Caco-2 (cell line): ENCODE measurements at regions of chr16 and their contacts with region 1.

Region 1: GRCh38 chr16:11715246-11715947 is 27.3 kb downstream of the TXNDC11 start:
- DNase-seq: no peak
- H3K4me3 ChIP-seq: no peak overlapping the region
- H3K4me3 Mint-ChIP-seq: no peak overlapping the region
- H3K27ac Mint-ChIP-seq: no peak overlapping the region
- H3K4me1 ChIP-seq: no peaks in the 10 kb centered on the region
- H3K4me1 Mint-ChIP-seq: peaks cover 6% of the 10 kb centered on the region
- H3K27me3 ChIP-seq: no peaks in the 10 kb centered on the region
- H3K27me3 Mint-ChIP-seq: no peaks in the 10 kb centered on the region
- CTCF ChIP-seq: no peak

Region 2: DNA sequence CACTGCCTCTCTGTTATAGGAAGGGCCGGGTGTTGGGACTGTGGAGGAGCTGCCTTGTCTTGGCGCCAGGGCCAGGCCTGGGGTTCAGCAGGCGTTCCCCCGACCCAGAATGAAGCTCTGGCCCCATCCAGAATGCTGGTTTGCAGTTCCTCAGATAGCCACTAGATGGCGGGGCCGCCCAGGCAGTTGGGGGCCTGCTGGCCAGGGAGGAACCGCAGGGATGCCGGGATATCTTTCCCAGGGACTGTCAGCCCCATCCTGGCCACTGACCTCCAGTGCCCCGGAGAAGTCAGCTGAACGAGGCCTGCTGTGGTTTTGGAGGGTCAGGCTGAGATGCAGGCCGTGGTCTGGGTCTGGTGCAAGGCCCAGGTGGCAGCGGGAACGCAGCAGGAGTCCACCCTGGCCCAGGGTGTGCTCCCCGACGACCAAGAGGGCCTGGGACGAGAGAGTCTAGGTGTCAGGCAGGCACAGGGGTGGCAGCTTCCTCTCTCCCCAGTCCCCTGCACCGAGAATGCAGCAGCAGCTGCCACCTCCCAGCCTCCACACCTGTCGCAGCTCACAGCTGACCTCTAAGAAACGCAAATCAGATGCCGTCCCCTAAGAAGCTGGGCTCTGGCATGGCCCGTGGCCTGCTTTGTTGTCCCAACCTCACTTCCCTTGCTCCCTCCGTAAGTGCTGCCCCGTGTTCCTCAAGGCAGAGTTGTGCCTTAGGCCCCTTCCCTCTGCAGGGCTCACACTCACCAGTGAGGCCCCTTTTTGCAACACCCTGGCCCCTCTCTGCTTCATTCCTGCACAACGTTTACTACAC is 319.0 kb before region 1 on chr16:
- CTCF ChIA-PET with region 1: interaction called, 5 read pairs
- POLR2A ChIA-PET with region 1: no interaction called
- intact Hi-C with region 1: loop called (anchors 1 kb)
- DNase-seq: peak; percentile 68 to 83
- H3K4me3 ChIP-seq: no peak overlapping the region
- H3K4me3 Mint-ChIP-seq: no peak overlapping the region
- H3K27ac Mint-ChIP-seq: no peak overlapping the region
- H3K4me1 ChIP-seq: no peaks in the 10 kb centered on the region
- H3K4me1 Mint-ChIP-seq: no peaks in the 10 kb centered on the region
- H3K27me3 ChIP-seq: no peaks in the 10 kb centered on the region
- H3K27me3 Mint-ChIP-seq: no peaks in the 10 kb centered on the region
- CTCF ChIP-seq: peak; percentile 96 to 97

Region 3: GRCh38 chr16:11535471-11535870 is 179.9 kb before region 1 on chr16:
- CTCF ChIA-PET with region 1: interaction called, 3 read pairs
- POLR2A ChIA-PET with region 1: no interaction called
- intact Hi-C with region 1: loop called (anchors 1 kb)
- DNase-seq: no peak
- H3K4me3 ChIP-seq: no peak overlapping the region
- H3K4me3 Mint-ChIP-seq: no peak overlapping the region
- H3K27ac Mint-ChIP-seq: no peak overlapping the region
- H3K4me1 ChIP-seq: no peaks in the 10 kb centered on the region
- H3K4me1 Mint-ChIP-seq: no peaks in the 10 kb centered on the region
- H3K27me3 ChIP-seq: no peaks in the 10 kb centered on the region
- H3K27me3 Mint-ChIP-seq: no peaks in the 10 kb centered on the region
- CTCF ChIP-seq: no peak

Region 4: DNA sequence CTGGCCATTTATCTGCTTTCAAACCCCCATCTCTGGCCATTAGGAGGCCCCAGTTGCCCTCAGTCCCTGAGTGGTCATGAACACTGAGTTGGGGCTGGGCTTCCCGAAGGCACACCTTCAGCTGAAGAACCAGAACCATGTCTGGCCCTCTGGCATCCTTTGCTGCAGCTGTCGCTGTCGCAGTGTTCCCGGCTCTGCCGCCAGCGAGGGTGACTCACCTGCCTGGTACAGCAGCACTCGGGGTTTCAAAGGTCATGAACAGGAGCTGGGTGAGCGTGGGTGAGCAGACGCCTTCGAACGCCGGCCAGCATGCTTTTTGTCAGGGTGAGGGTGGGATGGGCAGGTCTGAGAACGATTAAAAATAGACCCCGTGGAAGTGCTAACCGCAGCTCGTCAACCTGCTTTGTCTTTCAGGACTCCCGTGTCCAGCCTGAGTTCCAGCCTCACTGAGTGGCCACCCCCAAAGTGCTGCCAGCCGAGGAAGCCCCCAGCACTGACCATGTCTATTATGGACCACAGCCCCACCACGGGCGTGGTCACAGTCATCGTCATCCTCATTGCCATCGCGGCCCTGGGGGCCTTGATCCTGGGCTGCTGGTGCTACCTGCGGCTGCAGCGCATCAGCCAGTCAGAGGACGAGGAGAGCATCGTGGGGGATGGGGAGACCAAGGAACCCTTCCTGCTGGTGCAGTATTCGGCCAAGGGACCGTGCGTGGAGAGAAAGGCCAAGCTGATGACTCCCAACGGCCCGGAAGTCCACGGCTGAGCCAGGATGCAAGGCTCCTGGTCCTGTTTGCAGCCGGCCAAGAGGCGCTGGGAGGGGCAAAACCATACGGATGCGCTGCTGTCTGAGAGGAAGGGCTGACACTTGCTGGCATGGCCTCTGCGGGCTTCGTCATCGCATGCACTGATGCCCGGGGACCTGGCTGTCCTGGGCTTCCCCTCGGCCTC is 39.6 kb before region 1 on chr16:
- CTCF ChIA-PET with region 1: no interaction called
- POLR2A ChIA-PET with region 1: no interaction called
- intact Hi-C with region 1: loop called (anchors 1 kb)
- DNase-seq: peak; percentile 69 to 81
- H3K4me3 ChIP-seq: no peak overlapping the region
- H3K4me3 Mint-ChIP-seq: no peak overlapping the region
- H3K27ac Mint-ChIP-seq: peak overlapping the region; percentile 44
- H3K4me1 ChIP-seq: peaks cover 13% of the 10 kb centered on the region
- H3K4me1 Mint-ChIP-seq: peaks cover 6% of the 10 kb centered on the region
- H3K27me3 ChIP-seq: no peaks in the 10 kb centered on the region
- H3K27me3 Mint-ChIP-seq: no peaks in the 10 kb centered on the region
- CTCF ChIP-seq: peak in 1 of 2 experiments; percentile 3

Region 5: GRCh38 chr16:11727796-11728543 is 12.6 kb after region 1 on chr16:
- CTCF ChIA-PET with region 1: no interaction called
- POLR2A ChIA-PET with region 1: no interaction called
- intact Hi-C with region 1: no loop called
- DNase-seq: no peak
- H3K4me3 ChIP-seq: no peak overlapping the region
- H3K4me3 Mint-ChIP-seq: no peak overlapping the region
- H3K27ac Mint-ChIP-seq: no peak overlapping the region
- H3K4me1 ChIP-seq: peaks cover 7% of the 10 kb centered on the region
- H3K4me1 Mint-ChIP-seq: no peaks in the 10 kb centered on the region
- H3K27me3 ChIP-seq: no peaks in the 10 kb centered on the region
- H3K27me3 Mint-ChIP-seq: no peaks in the 10 kb centered on the region
- CTCF ChIP-seq: no peak